Heart right ventricle (tissue), 16 donors: ENCODE measurements at regions of chr3 and their contacts with region 1.

Region 1: GRCh38 chr3:39750712-39751111 is 58.7 kb upstream of the MYRIP start:
- DNase-seq: no peak
- ATAC-seq: no peak
- H3K4me3 ChIP-seq: no peak overlapping the region
- H3K27ac ChIP-seq: peak overlapping the region in 2 of 10 donors; percentile 18 to 57
- H3K4me1 ChIP-seq: peaks cover 0 to 25% (median 5%) of the 10 kb centered on the region in 9 donors
- H3K27me3 ChIP-seq: no peaks in the 10 kb centered on the region
- CTCF ChIP-seq: no peak

Region 2: GRCh38 chr3:39733804-39734203 is 16.9 kb before region 1 on chr3:
- intact Hi-C with region 1: loop called in 1 of 10 experiments (anchors 1 kb)
- DNase-seq: no peak
- ATAC-seq: no peak
- H3K4me3 ChIP-seq: no peak overlapping the region
- H3K27ac ChIP-seq: no peak overlapping the region
- H3K4me1 ChIP-seq: no peaks in the 10 kb centered on the region
- H3K27me3 ChIP-seq: no peaks in the 10 kb centered on the region
- CTCF ChIP-seq: no peak